HCT116 (cell line): ENCODE measurements at regions of chr9 and their contacts with region 1.

Region 1: DNA sequence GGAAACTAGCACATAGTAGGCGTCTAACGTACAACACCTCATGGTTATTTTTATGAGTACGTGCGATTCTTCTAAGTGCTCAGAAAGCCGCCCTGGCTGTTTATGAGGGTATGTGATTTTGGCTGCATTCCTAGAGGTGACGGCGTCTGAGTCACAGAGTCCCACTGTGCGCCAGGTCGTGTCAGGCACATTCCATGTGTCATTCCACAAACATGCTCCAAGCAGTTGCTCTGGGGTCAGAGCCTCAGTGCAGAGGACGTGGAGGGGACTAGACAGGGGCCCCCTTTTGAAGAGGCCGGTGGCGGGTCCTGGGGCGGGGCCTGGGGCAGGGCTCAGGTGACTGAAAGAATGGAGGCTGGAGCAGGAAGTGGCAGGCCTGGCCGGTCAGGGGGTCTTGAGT is 51.9 kb downstream of the NEK6 start:
- DNase-seq: peak; percentile 92
- ATAC-seq: peak; percentile 93
- H3K4me3 ChIP-seq: peak overlapping the region in 1 of 2 experiments; percentile 27; a peak in 2 of 4 replicates
- H3K27ac ChIP-seq: peak overlapping the region; percentile 35
- H3K4me1 ChIP-seq: peaks cover 30 to 60% of the 10 kb centered on the region in 2 experiments
- H3K27me3 ChIP-seq: no peaks in the 10 kb centered on the region
- CTCF ChIP-seq: no peak
- POLR2A ChIP-seq: no peak
- RAD21 ChIP-seq: no peak

Region 2: GRCh38 chr9:123544007-123544827 is 765.4 kb before region 1 on chr9:
- CTCF ChIA-PET with region 1: no interaction called
- POLR2A ChIA-PET with region 1: no interaction called
- RAD21 ChIA-PET with region 1: no interaction called
- intact Hi-C with region 1: loop called (anchors 10 kb)
- DNase-seq: peak; percentile 12
- ATAC-seq: peak; percentile 63; the same call in 1 of the 2 replicates
- H3K4me3 ChIP-seq: no peak overlapping the region
- H3K27ac ChIP-seq: no peak overlapping the region
- H3K4me1 ChIP-seq: no peaks in the 10 kb centered on the region
- H3K27me3 ChIP-seq: no peaks in the 10 kb centered on the region
- CTCF ChIP-seq: peak; percentile 81 to 83 (median 83)
- POLR2A ChIP-seq: no peak
- RAD21 ChIP-seq: peak; percentile 94

Region 3: DNA sequence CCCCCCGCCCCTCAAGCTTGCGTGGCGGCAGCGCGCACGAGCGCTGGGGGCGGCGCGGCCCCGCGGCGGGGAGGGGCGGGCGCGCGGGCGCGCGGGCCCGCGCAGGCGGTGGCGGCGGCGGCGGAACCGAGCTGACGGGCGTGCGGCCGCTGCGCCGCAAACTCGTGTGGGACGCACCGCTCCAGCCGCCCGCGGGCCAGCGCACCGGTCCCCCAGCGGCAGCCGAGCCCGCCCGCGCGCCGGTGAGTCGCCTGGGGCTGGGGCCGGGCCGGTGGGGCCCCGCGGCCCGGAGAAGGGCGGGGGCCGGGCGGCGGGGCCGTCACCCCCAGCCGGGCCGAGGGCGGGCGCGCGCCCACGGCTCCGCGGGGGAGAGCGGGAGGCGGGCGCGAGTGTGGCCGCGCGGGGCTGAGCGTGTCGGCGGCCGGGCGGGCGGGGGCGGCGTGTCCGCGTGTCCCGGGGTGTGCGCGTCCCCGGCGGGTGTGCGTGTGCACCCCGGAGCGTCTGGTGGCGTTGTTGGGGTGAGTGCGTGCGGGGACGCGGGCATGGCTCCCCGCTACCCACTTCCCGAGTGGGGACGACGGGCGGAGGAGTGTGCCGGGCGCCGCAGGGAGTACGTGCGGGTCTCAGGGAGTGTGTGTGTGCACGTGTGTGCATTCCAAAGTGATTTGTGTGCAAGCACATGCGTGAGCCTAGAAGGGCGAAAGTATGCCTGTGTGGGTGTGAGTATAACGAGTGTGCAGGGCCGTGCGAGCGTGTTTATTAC is 51.6 kb before region 1 on chr9 and contains the start of gene NEK6:
- CTCF ChIA-PET with region 1: no interaction called
- POLR2A ChIA-PET with region 1: no interaction called
- RAD21 ChIA-PET with region 1: no interaction called
- intact Hi-C with region 1: loop called (anchors 5 kb)
- DNase-seq: no peak
- ATAC-seq: peak; percentile 28
- H3K4me3 ChIP-seq: peak within 1 kb of the TSS; percentile 66 to 93
- H3K27ac ChIP-seq: peak within 1 kb of the TSS; percentile 94
- H3K4me1 ChIP-seq: peaks cover 31 to 49% of the 10 kb centered on the region in 2 experiments
- H3K27me3 ChIP-seq: no peaks in the 10 kb centered on the region
- CTCF ChIP-seq: no peak
- POLR2A ChIP-seq: no peak
- RAD21 ChIP-seq: no peak
- total RNA-seq, gene NEK6: 40.8 TPM

Region 4: DNA sequence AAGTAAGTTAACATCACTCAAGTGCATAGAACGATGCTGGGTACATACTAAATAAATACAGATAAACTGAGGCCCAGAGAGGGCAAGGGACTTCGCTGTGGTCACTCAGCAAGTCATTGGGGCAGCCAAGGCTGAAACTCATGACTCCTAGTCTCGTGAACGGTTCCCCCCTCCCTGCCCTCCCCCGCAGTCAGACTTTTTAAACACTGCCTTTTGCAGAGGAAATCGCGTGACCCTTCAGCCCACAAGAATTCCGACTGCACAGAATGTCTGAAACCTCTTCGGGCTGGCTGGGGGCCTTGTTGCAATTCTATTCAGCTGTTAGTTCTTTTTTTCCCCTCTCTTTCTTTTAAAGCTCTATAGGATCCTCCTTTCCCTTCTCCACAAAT is 23.8 kb before region 1 on chr9:
- CTCF ChIA-PET with region 1: no interaction called
- POLR2A ChIA-PET with region 1: no interaction called
- RAD21 ChIA-PET with region 1: no interaction called
- intact Hi-C with region 1: no loop called
- DNase-seq: no peak
- ATAC-seq: peak; percentile 21; the same call in 1 of the 2 replicates
- H3K4me3 ChIP-seq: no peak overlapping the region
- H3K27ac ChIP-seq: no peak overlapping the region
- H3K4me1 ChIP-seq: peaks cover 18 to 42% of the 10 kb centered on the region in 2 experiments
- H3K27me3 ChIP-seq: no peaks in the 10 kb centered on the region
- CTCF ChIP-seq: no peak
- POLR2A ChIP-seq: no peak
- RAD21 ChIP-seq: no peak